ENCODE measurements at regions of chr2 and their contacts with region 1.

Region 1: DNA sequence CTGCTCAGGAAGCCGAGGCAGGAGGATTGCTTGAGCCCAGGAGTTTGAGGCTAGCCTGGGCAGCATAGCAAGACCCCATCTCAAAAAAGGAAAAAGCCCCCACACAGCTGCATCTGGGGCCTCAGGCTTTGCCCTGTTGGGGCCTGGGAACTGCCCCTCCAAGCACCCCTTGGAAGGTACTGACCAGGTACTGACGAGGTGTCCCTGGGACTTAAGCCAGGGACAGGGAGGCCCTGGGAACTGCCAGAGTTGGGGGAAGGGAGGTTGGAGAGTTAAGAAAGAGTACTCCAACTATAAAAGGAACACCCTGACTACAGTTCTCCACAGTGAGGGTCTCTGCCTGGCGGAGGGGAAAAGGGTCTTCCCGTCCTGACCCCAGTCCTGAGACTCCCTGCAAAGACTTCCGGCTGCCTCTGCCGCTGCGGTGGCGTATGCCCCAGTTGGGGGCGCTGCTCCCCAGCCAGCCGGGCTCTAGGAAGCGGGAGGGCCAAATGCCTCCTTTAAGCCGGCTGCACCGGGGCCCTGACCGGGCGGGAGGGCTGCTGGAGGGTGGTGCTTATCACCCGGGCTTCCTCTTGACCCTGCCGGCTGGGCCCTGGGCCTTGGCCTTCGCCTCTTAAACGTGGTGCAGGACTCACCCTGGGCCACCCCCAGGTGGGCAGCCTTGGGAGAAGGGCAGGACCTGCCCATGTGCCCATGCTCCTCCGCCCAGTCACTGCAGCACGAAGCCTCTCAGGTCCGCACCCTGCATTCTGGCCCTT is 12.8 kb downstream of the SLC30A3 start:
- DNase-seq: no peak
- H3K4me3 ChIP-seq: no peak overlapping the region
- H3K27ac ChIP-seq: no peak overlapping the region
- H3K4me1 ChIP-seq: no peaks in the 10 kb centered on the region
- H3K27me3 ChIP-seq: no peaks in the 10 kb centered on the region
- CTCF ChIP-seq: peak; percentile 45 to 72

Region 2: DNA sequence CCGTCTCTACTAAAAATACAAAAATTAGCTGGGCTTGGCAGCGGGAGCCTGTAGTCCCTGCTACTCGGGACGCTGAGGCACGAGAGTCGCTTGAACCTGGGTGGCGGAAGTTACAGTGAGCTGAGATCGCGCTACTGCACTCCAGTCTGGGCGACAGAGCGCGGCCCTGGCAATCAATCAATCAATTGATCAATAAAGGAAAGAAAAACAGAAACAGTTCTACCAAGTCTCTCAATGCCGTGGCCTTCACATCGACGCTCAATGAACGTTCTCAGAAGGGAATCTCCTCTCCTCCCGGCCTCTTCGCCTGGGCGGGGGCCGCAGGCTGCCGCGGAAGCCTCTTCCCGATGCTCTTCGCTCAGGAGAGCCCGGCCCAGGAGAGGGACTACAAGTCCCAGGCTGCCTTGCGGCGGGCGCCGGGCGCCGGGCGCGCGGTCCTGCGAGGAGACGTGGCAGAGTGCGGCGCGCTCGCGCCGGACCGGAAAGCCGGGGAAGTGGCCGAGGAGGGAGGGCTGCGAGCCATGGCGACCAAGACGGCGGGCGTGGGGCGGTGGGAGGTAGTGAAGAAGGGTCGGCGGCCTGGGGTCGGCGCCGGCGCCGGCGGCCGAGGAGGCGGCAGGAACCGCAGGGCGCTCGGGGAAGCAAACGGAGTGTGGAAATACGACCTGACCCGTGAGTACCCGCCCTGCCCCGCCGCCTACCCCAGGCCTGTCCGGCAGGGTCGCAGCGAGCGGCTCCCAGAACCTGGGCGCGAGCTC is 217.4 kb before region 1 on chr2 and contains the start of gene TMEM214:
- CTCF ChIA-PET with region 1: no interaction called
- dilution Hi-C with region 1: no loop called
- in situ Hi-C with region 1: no loop called
- intact Hi-C with region 1: no loop called
- DNase-seq: peak; percentile 80
- H3K4me3 ChIP-seq: peak within 1 kb of the TSS; percentile 70 to 100 (median 96)
- H3K27ac ChIP-seq: peak within 1 kb of the TSS; percentile 71
- H3K4me1 ChIP-seq: peaks cover 11% of the 10 kb centered on the region
- H3K27me3 ChIP-seq: no peaks in the 10 kb centered on the region
- CTCF ChIP-seq: no peak
- total RNA-seq, gene TMEM214: 27.3 to 90.7 TPM

Region 3: DNA sequence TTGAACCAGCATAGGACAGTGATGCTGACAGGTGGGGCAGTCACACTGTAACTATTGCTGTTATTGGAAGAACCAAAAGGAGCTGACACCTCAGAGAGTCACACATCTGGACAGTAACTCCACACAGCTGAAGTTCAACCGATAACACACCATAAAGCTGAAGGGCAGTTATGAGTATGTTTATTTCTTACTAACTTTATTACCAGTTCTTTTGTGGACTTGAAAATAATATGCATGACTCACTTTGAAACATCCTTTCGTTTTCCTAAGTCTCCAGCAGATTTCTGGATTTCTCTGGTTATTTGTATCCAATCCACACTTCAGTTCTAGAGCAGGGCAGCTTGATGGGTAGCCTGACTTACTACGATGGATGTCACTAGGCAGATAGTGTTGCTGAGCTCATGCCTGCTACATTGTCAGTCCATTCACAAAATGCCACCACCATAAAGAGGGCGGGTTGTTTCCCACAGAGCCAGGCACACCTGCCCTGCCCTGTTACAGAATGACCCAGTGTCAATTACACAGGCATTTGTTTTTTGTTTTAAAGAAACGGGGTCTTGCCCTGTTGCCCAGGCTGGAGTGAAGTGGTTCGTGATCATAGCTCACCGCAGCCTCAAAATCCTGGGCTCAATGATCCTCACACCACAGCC is 207.0 kb before region 1 on chr2:
- CTCF ChIA-PET with region 1: no interaction called
- dilution Hi-C with region 1: no loop called
- in situ Hi-C with region 1: no loop called
- intact Hi-C with region 1: no loop called
- DNase-seq: no peak
- H3K4me3 ChIP-seq: no peak overlapping the region
- H3K27ac ChIP-seq: no peak overlapping the region
- H3K4me1 ChIP-seq: no peaks in the 10 kb centered on the region
- H3K27me3 ChIP-seq: no peaks in the 10 kb centered on the region
- CTCF ChIP-seq: no peak

Region 4: GRCh38 chr2:27347641-27348040 is 97.6 kb after region 1 on chr2:
- CTCF ChIA-PET with region 1: no interaction called
- dilution Hi-C with region 1: loop called (anchors 5 kb)
- in situ Hi-C with region 1: no loop called
- intact Hi-C with region 1: no loop called
- DNase-seq: no peak
- H3K4me3 ChIP-seq: no peak overlapping the region
- H3K27ac ChIP-seq: no peak overlapping the region
- H3K4me1 ChIP-seq: no peaks in the 10 kb centered on the region
- H3K27me3 ChIP-seq: no peaks in the 10 kb centered on the region
- CTCF ChIP-seq: no peak

Measured in mammary epithelial cell (primary cell).